ENCODE measurements at regions of chr7 and their contacts with region 1.

Region 1: GRCh38 chr7:51162724-51163329 is 153.8 kb downstream of the COBL start:
- DNase-seq: peak; percentile 72
- H3K4me3 ChIP-seq: no peak overlapping the region
- H3K27ac ChIP-seq: no peak overlapping the region
- H3K4me1 ChIP-seq: no peaks in the 10 kb centered on the region
- H3K27me3 ChIP-seq: peaks cover 2% of the 10 kb centered on the region
- CTCF ChIP-seq: peak; percentile 87 to 90

Region 2: DNA sequence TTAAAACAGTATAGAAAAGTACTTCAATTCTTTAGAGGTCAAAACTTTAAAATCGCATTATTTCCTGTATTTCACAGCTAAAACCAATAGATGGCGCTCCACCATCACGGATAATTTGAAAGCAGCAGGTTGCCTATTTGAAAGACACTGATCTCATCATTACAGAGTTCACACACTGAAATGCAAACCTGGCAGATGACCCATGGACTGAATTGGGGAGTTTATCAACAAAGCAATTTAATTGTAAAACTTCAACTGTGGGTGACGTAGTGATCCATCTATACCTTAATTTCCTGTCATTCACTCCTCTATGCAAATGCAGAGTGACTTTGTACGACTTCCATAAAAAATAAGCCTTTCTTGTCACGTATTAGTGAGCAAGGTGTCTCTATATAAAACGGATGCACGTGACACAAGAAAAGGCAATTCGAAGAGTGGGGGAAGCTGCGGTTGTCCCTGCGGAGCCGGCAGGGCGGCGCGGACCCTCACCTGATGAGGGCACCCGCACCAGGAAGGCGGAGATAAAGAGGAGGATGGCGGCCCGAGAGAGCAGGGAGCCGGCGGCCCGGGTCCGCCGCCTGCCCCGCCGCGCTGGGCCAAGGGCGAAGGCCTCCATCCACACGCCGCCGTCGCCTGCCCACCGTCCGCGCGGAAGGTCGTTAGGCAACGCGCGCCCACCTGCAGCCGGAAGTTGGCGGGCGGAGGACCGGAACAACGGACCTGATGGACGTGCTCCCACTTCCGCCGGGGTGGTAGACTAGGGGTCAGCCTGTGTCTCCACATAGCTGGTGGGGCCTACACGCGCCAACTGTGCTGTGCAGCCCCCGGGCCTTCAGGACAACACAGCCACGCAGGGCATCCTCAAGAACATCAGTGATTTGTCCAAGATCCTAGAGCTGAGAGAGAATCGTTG is 1070.0 kb before region 1 on chr7 and contains the start of gene ZPBP:
- CTCF ChIA-PET with region 1: interaction called, 12 read pairs
- dilution Hi-C with region 1: no loop called
- in situ Hi-C with region 1: no loop called
- intact Hi-C with region 1: loop called (anchors 2 kb)
- DNase-seq: peak; percentile 25
- H3K4me3 ChIP-seq: peak within 1 kb of the TSS in 2 of 3 experiments; percentile 38 to 40
- H3K27ac ChIP-seq: no peak within 1 kb of the TSS
- H3K4me1 ChIP-seq: no peaks in the 10 kb centered on the region
- H3K27me3 ChIP-seq: peaks cover 4% of the 10 kb centered on the region
- CTCF ChIP-seq: peak; percentile 67 to 71
- total RNA-seq, gene ZPBP: 0.17 TPM in 1 of 2 donors, not detected in the other

Region 3: GRCh38 chr7:50142425-50143017 is 1020.3 kb before region 1 on chr7:
- CTCF ChIA-PET with region 1: no interaction called
- dilution Hi-C with region 1: no loop called
- in situ Hi-C with region 1: no loop called
- intact Hi-C with region 1: loop called (anchors 10 kb)
- DNase-seq: no peak
- H3K4me3 ChIP-seq: no peak overlapping the region
- H3K27ac ChIP-seq: no peak overlapping the region
- H3K4me1 ChIP-seq: no peaks in the 10 kb centered on the region
- H3K27me3 ChIP-seq: no peaks in the 10 kb centered on the region
- CTCF ChIP-seq: peak; percentile 61 to 67

Region 4: GRCh38 chr7:50544992-50545391 is 617.8 kb before region 1 on chr7:
- CTCF ChIA-PET with region 1: no interaction called
- dilution Hi-C with region 1: no loop called
- in situ Hi-C with region 1: no loop called
- intact Hi-C with region 1: no loop called
- DNase-seq: no peak
- H3K4me3 ChIP-seq: no peak overlapping the region
- H3K27ac ChIP-seq: no peak overlapping the region
- H3K4me1 ChIP-seq: no peaks in the 10 kb centered on the region
- H3K27me3 ChIP-seq: no peaks in the 10 kb centered on the region
- CTCF ChIP-seq: no peak

Region 5: GRCh38 chr7:51080622-51081269 is 82.1 kb before region 1 on chr7:
- CTCF ChIA-PET with region 1: no interaction called
- dilution Hi-C with region 1: no loop called
- in situ Hi-C with region 1: no loop called
- intact Hi-C with region 1: loop called (anchors 1 kb)
- DNase-seq: no peak
- H3K4me3 ChIP-seq: no peak overlapping the region
- H3K27ac ChIP-seq: no peak overlapping the region
- H3K4me1 ChIP-seq: no peaks in the 10 kb centered on the region
- H3K27me3 ChIP-seq: peaks cover 4% of the 10 kb centered on the region
- CTCF ChIP-seq: no peak

Region 6: DNA sequence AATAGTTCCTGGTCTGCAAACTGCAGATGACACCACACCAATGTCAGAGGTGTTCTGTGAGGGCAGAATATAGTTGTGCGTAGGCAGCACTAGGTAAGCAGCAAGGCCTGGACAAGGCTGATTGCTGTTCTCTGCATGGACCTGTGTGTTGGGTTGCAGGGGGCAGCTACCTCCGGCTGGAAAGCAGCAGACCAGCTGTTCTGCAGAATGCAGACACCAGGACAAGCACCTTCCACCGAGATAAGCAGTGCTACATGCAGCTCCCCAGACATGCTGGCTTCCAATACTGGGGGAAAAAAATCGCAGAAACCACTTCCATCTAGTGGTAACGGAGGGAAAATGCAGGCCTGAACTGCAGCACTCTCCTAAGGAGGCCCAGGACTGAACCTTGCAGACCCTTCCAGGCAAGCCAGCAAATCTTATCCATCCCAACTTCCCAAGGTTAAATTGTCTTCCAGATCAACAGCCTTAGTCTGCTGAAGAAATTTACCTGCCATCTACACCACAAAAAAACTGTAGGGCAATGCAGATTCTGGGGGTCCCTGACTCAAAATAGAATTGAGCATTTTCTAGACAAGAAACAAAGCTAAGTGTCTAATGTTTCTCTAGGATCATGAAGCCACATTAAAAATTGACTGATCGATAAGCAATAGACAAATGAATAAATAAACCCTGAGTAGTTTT is 204.2 kb after region 1 on chr7:
- CTCF ChIA-PET with region 1: interaction called, 14 read pairs
- dilution Hi-C with region 1: no loop called
- in situ Hi-C with region 1: loop called (anchors 5 to 10 kb)
- intact Hi-C with region 1: loop called (anchors 1 kb)
- DNase-seq: peak; percentile 34
- H3K4me3 ChIP-seq: no peak overlapping the region
- H3K27ac ChIP-seq: no peak overlapping the region
- H3K4me1 ChIP-seq: no peaks in the 10 kb centered on the region
- H3K27me3 ChIP-seq: no peaks in the 10 kb centered on the region
- CTCF ChIP-seq: peak; percentile 66 to 80